ENCODE measurements at regions of chr2 and their contacts with region 1.

Region 1: GRCh38 chr2:24791452-24791851 is 1.7 kb downstream of the PTRHD1 start:
- DNase-seq: no peak
- ATAC-seq: no peak
- H3K4me3 ChIP-seq: peak overlapping the region; percentile 70 to 80; a peak in 3 of 4 replicates
- H3K27ac ChIP-seq: peak overlapping the region; percentile 89
- H3K4me1 ChIP-seq: peaks cover 27% of the 10 kb centered on the region
- H3K27me3 ChIP-seq: no peaks in the 10 kb centered on the region
- CTCF ChIP-seq: no peak

Region 2: GRCh38 chr2:24461685-24462084 is 329.8 kb before region 1 on chr2:
- CTCF ChIA-PET with region 1: no interaction called
- POLR2A ChIA-PET with region 1: no interaction called
- in situ Hi-C with region 1: no loop called
- intact Hi-C with region 1: no loop called
- DNase-seq: no peak
- ATAC-seq: no peak
- H3K4me3 ChIP-seq: no peak overlapping the region
- H3K27ac ChIP-seq: no peak overlapping the region
- H3K4me1 ChIP-seq: no peaks in the 10 kb centered on the region
- H3K27me3 ChIP-seq: no peaks in the 10 kb centered on the region; the same call in none of the 2 replicates
- CTCF ChIP-seq: no peak

Region 3: DNA sequence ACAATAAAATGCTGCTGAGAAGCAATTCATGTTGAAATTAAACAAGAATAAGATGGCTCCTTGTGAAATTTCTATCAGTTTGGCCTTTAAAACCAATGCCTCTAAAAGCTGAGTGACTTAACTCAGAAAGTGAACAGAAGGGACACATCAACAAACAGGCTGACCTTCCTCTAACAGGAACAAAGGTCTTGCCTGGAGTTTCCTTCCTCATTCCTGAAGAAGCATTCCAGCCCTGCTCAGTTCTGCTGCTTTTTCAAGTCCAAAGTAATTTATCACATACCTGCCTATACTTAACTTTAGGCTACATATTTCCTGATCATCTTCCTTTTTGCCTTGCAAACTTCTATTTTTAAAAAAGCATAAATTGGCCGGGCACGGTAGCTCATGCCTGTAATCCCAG is 12.3 kb before region 1 on chr2:
- CTCF ChIA-PET with region 1: interaction called, 15 read pairs
- POLR2A ChIA-PET with region 1: no interaction called
- in situ Hi-C with region 1: no loop called
- intact Hi-C with region 1: no loop called
- DNase-seq: no peak
- ATAC-seq: no peak
- H3K4me3 ChIP-seq: no peak overlapping the region
- H3K27ac ChIP-seq: no peak overlapping the region
- H3K4me1 ChIP-seq: no peaks in the 10 kb centered on the region
- H3K27me3 ChIP-seq: no peaks in the 10 kb centered on the region
- CTCF ChIP-seq: no peak

Region 4: DNA sequence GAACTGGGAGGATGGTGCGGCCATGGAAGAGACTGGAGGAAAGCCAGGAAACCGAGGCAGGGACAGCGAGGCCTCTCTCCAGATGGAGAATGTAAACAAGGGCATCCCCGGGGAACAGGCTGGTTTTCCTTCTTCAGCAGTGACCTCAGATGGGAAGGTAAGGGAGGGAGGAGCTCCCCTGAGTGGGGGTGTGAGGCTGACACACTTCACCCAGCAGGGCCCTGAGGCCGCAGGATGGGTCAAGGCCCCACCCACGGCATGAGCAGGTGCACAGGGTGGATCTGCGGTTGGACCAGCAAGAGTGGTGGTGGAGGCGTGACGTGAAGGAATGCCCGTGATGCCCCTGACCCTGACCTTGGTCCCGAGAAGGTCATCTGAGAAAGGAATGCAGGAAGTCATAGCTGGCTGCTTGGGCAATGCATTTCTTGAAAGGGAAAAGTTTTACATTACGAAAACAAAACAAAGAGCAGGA is 80.4 kb after region 1 on chr2:
- CTCF ChIA-PET with region 1: no interaction called
- POLR2A ChIA-PET with region 1: no interaction called
- in situ Hi-C with region 1: no loop called
- intact Hi-C with region 1: no loop called
- DNase-seq: no peak
- ATAC-seq: no peak
- H3K4me3 ChIP-seq: no peak overlapping the region
- H3K27ac ChIP-seq: no peak overlapping the region
- H3K4me1 ChIP-seq: no peaks in the 10 kb centered on the region
- H3K27me3 ChIP-seq: no peaks in the 10 kb centered on the region
- CTCF ChIP-seq: no peak